Heart left ventricle (tissue), 16 donors: ENCODE measurements at regions of chr1 and their contacts with region 1.

Region 1: DNA sequence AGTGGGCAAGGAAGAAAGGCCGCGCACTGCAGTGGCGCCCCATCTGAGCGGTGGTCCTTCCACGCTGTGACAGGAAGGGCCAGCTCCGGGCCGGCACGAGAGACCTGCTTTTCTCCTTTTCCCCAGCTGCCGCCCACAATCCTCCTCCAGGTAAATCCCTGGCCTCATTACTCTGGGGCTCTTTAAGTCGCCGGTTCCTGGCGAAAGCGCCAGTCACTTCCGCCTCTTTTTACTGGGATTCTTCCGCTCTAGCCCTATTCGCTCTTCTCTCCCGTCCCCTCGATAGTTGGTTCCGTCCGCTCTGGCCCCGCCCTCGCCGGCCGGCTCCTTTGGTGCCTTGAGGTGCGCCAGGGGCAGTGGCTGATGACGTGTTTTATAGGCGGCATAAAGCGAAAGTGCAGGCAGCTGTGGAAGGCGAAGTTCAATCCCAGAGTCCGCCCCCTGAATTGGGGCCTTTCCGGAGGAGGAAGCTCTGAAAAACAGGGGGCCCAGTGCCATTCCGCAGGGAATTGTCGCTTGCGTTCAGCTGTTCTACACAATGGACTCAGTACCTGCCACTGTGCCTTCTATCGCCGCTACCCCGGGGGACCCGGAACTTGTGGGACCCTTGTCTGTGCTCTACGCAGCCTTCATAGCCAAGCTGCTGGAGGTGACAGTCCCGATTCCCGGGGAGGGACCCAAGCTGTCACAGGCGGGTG is 26.2 kb downstream of the MIA3 start:
- DNase-seq: peak; percentile 97 to 99 (median 98)
- ATAC-seq: peak; percentile 100
- H3K4me3 ChIP-seq: peak overlapping the region; percentile 58 to 94 (median 80)
- H3K27ac ChIP-seq: peak overlapping the region; percentile 86 to 99 (median 96)
- H3K4me1 ChIP-seq: peaks cover 0 to 21% (median 12%) of the 10 kb centered on the region in 12 donors
- H3K27me3 ChIP-seq: no peaks in the 10 kb centered on the region
- CTCF ChIP-seq: peak in 1 of 12 donors; percentile 11
- POLR2A ChIP-seq: peak in 1 of 2 donors; percentile 71

Region 2: DNA sequence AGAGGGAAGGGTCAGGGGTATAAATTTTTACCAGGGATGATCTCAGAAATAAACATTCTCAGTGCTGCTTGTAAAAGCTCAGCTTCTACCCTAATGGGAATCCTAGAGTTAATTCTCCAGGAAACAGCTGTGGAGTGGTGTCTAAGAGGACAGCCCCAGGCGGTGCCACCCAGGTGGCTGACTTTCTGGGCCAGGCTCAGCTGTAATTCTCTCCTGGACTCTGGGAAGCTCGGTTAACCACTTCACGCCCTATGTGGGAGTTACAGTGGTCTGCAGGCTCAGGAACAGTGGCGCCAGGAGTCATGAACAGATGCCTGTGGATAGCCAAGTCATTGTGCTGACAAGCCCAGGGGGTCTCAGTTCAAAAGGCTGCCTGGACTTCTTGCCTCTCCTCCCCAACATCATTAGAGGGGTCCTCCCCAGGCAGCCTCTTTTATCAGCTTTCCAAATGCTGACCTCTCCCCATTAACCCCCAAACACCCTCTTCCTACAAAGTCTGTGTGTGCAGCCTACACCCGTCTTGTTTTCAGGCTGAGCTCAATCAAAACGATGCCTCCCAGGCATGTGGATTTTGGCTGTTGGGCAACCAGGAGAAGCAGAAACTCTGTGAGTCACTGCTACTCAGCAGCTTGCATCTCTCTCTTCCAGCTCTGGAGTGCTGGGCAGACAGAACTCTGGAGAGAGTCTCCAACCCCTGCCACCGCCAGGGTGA is 97.4 kb before region 1 on chr1:
- intact Hi-C with region 1: no loop called
- DNase-seq: no peak
- ATAC-seq: no peak
- H3K4me3 ChIP-seq: no peak overlapping the region
- H3K27ac ChIP-seq: no peak overlapping the region
- H3K4me1 ChIP-seq: no peaks in the 10 kb centered on the region
- H3K27me3 ChIP-seq: peaks cover 0 to 36% (median 6%) of the 10 kb centered on the region in 9 donors
- CTCF ChIP-seq: no peak
- POLR2A ChIP-seq: no peak

Region 3: GRCh38 chr1:222600281-222600680 is 43.8 kb before region 1 on chr1:
- intact Hi-C with region 1: no loop called
- DNase-seq: no peak
- ATAC-seq: no peak
- H3K4me3 ChIP-seq: no peak overlapping the region
- H3K27ac ChIP-seq: no peak overlapping the region
- H3K4me1 ChIP-seq: no peaks in the 10 kb centered on the region
- H3K27me3 ChIP-seq: no peaks in the 10 kb centered on the region
- CTCF ChIP-seq: no peak
- POLR2A ChIP-seq: no peak

Region 4: GRCh38 chr1:222617367-222617951 is 26.6 kb before region 1 on chr1:
- intact Hi-C with region 1: loop called in 1 of 10 experiments (anchors 2 kb)
- DNase-seq: peak; percentile 92 to 96 (median 94)
- ATAC-seq: peak; percentile 90 to 98 (median 94)
- H3K4me3 ChIP-seq: peak overlapping the region; percentile 32 to 98 (median 72)
- H3K27ac ChIP-seq: peak overlapping the region in 10 of 12 donors; percentile 18 to 81 (median 54)
- H3K4me1 ChIP-seq: peaks cover 0 to 16% (median 10%) of the 10 kb centered on the region in 12 donors
- H3K27me3 ChIP-seq: peaks cover 0 to 12% (median 0%) of the 10 kb centered on the region in 9 donors
- CTCF ChIP-seq: no peak
- POLR2A ChIP-seq: peak in 1 of 2 donors; percentile 35